Cardiac septum (tissue), 1 donor: ENCODE measurements at regions of chr2 and their contacts with region 1.

Region 1: DNA sequence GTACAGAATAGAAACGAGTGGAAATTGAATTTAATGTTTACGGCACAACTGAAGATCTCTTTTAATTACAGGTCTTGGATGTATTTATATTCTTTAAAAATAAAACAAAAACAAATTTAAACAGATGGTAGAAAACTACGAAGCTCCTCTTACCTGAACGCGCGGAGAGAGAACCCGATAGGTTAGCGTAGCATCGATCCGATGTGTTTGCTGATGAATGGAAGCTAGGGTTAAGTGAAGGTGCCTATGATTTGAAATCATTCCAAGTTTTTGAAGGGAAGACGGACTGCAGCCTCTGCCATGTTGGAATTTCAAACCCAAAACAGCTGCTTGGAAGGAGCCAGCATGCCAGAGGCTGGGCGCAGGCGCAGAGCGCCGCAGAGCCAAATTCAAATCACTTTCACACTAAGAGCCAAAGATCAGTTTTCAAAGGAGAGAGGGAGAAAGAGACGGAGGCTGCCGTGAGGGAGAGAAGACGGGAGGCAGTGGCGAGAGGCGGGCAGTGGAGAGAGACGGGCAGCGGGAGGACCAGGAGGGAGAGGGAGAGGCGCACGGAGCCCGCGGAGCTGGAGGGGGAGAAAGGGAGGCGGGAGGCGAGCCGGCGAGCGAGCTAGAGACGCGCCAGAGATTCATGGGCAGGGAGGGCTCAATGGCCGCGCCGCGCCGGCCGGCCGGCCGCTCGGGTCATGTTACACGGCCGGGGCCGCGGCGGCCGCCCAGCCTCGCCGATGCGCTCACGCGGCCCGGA is at the start of gene FIGN:
- DNase-seq: peak; percentile 86
- total RNA-seq, gene FIGN: 16.4 TPM

Region 2: GRCh38 chr2:163471947-163472346 is 263.9 kb before region 1 on chr2:
- intact Hi-C with region 1: loop called (anchors 5 kb)
- DNase-seq: no peak

Region 3: DNA sequence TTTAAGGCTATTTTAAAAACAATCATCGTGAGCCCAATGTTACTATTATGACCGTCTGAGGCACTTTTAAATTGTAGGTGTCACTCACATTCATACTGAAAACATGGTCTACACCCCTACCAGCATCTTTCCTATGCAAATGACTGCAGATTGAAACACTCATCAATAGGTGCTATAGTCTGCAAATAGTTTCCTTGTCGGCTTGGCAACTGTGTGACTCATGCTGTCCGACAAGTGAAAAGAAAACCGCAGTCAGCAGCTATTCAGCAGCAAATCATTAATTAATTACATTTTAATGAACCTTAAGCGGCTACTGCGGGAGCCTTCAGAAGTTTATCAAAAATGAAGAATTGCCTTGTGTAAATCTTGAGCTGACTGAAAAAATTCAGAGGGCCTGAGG is 134.5 kb before region 1 on chr2:
- intact Hi-C with region 1: loop called (anchors 10 kb)
- DNase-seq: no peak

Region 4: GRCh38 chr2:163667064-163667887 is 68.6 kb before region 1 on chr2:
- intact Hi-C with region 1: loop called (anchors 5 kb)
- DNase-seq: no peak

Region 5: DNA sequence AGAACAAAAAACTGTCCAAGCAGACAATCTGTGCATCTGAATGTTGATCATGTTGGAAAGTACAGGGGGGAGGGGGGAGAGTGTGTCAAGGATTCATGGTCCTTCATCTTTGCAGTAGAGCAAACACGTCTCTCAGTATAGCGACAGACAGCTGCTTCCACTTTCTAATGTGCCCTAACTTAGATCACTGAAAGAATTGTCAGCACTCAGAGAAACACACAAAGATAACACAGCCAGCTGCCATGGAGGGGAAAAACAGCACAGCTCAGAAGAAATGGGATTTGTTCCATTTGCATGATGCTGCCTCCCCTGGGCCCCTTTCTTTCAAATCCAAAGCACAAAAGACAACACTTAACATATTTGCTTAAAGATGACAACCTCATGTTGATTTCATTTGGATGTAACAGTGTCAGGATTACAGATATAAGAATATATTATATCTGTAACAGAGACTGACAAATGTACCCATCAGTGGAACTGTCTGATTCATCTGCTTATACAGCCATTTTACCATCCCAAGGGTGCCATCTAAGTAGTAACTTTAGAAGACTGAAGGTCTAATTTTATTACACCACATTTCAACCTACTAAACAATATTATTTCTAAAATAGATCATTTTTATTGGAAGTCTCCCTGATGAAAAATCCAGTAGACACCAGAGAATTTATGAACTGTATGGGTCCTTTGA is 17.7 kb before region 1 on chr2:
- intact Hi-C with region 1: no loop called
- DNase-seq: no peak

Region 6: GRCh38 chr2:163878531-163879117 is 142.8 kb after region 1 on chr2:
- intact Hi-C with region 1: loop called (anchors 5 kb)
- DNase-seq: no peak

Region 7: DNA sequence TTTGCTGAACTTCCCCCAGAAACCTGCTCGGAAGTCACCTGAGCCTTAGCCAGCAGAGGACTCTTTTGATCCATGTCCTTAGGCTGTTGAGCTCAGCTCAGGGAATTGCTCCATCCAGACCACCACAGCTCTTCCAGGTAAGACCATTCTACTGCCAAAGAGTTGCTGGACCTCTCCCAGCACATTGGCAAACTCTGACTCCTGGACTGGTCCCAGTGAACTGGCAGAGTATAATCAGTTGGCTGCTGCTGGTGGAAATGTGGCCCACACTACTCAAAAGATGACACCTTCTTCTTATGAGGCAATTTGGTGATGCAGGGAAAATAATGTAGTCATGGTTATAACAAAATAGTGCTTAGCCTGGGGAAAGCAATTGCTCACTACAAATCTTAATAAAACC is 308.8 kb after region 1 on chr2:
- intact Hi-C with region 1: loop called (anchors 5 kb)
- DNase-seq: no peak